Activated T-helper 1 cell treated with anti-CD3 and anti-CD28 coated beads, Interleukin-12 subunit alpha, Interleukin-12 subunit beta, Interleukin-2, Interleukin-4 antibody, amounts not matched to agents 30 ng/mL and 10 ng/mL and 1 ng/mL, durations not matched to agents 14 hours and 24 hours and 36 hours (primary cell): ENCODE measurements at regions of chr1 and their contacts with region 1.

Region 1: DNA sequence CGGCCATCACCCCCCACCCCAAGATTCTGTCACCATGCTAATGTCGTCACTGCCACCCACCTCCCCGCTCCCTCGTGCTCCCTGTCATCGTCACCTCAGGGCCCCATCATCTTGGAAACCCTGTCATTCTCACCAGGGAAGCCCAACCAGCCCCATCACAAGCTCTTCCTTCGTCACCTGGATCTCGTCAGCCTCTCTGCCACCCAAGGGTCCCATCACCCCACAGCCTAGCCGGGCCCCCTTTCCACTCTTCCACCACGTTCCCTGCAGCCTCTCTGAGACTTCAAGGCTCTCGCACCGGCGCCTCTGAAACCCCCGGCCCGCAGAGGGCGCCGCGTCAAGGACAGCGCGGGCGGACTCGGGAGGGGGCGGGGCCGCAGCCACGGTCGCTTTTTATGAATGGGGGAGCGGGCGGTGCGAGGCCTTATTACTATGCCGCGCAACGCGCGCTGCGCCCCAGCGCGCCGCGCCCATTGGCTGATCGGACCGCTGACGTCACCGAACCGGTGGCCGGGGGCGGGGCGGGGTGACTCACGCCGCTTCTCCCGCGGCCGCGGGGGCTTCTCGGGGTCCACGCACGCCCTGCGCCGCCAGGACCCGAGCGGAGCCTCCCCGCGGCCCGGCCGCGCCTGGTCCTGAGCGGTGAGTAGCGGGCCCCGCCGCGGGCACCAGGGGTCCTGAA is at the start of gene GPR3:
- DNase-seq: peak; percentile 91
- H3K4me3 Mint-ChIP-seq: peak within 1 kb of the TSS; percentile 82
- H3K27ac Mint-ChIP-seq: peak within 1 kb of the TSS; percentile 93
- H3K4me1 Mint-ChIP-seq: peaks cover 12% of the 10 kb centered on the region
- H3K27me3 Mint-ChIP-seq: peaks cover 12% of the 10 kb centered on the region
- total RNA-seq, gene GPR3: 3.2 and 4.0 TPM in 2 replicates

Region 2: DNA sequence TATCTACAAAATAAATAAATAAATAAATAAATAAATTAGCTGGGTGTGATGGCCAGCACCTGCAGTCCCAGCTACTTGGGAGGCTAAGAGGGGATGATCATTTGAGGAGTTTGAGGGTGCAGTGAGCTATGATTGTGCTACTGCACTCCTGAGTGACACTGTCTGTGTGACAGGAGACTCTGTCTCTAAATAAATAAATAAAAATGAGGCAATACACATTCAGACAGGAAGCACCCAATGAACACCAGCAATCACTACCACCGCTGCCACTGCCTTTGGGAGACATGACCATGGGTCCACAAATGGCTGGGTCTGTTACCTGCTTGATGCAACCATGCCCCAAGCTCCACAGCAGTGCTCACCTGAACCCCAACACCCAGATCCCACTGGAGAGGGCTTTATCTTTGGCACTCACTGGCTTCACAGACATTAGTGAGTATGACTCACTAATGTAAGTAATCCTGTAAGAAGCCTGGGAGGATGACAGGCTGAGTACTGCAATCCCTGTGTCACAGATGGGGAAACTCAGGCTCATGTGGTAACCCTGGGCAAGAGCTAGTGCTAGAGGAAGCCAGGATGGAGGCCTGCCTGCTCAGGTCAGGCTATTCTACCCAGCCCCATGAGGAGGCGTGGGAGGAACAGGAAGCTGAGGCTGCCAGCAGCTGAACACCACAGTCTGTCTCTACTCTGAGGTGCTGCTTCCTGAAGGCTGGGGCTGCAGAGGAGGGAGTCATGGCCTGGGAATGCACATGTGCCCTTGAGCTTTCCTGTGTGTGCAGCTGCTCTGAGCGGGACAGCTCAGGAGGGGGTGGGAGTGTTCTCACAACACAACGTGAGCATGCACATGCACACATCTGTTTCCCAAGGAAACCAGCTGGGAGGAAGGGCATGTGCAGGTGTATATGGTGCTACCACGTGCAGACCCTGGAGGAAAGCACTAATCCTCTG is 280.3 kb before region 1 on chr1:
- intact Hi-C with region 1: loop called (anchors 10 kb)
- DNase-seq: peak; percentile 61
- H3K4me3 Mint-ChIP-seq: peak overlapping the region; percentile 41
- H3K27ac Mint-ChIP-seq: peak overlapping the region; percentile 77
- H3K4me1 Mint-ChIP-seq: peaks cover 49% of the 10 kb centered on the region
- H3K27me3 Mint-ChIP-seq: no peaks in the 10 kb centered on the region

Region 3: DNA sequence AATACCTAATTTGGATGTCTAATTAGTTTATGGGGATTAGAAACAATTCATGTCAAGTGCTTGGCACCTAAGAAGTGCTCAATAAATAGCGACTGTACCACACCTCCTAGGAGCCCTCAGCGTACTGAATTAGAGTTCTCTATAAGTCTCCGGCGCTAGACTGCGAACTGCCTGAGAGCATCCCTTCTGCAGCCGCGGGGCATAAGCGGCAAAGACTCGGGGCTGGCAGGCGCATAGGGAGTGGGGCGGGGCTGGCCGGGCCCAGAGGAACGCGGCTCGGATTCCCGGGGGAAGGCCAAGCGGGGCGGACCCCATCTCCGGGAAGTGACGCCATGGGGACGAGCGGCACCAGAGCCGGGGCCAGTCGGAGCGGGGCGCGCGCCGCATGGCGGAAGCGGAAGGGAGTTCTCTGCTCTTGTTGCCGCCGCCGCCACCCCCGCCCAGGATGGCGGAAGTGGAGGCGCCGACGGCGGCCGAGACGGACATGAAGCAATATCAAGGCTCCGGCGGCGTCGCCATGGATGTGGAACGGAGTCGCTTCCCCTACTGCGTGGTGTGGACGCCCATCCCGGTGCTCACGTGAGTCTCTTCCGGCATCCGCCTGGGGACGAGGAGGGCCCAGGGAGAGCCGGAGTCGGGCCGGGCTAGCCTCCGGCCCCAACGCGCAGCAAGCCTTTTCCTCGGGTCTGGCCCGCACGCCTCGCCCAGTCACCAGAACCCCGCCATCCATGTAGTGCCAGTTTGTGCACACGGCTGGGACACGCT is 70.2 kb before region 1 on chr1 and contains the start of gene TMEM222:
- intact Hi-C with region 1: loop called (anchors 1 kb)
- DNase-seq: peak; percentile 98
- H3K4me3 Mint-ChIP-seq: peak within 1 kb of the TSS; percentile 97
- H3K27ac Mint-ChIP-seq: peak within 1 kb of the TSS; percentile 90
- H3K4me1 Mint-ChIP-seq: peaks cover 33% of the 10 kb centered on the region
- H3K27me3 Mint-ChIP-seq: no peaks in the 10 kb centered on the region
- total RNA-seq, gene TMEM222: 44.3 and 47.4 TPM in 2 replicates

Region 4: DNA sequence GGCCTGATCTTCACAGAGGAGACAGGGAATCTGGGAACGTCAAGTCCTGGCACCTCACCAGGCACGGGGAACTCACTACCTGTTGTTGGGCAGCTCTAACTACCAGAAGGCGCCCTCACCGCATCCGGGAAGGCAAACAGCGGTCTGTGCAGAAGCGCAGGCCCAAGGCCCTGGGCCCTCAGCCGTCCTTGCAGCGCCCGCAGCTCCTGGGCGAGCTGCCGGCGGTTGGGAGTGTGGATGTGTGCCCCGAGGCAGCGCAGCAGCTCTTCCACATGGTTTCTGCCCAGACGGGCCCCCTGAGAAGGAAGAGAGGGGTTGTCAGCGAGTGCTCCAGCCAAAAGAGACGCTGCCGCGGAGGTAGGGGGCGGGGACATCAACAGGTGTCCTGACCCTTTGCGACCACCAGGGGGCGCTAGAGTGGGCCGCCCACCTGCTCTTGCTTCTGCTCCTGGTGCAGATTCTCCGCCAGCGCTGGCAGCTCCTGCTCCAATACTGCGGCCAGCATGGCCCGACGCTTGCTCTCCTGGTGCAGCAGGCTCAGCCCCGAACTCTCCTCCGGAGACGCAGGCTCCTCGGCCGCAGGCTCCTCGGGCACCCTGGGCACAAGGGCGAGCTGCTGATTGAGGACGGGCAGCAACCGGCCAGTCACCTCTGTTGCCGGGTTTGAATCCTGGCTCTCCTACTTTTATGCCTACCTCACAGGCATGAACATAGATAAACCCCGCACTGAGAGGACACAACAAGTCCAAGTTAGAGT is 34.8 kb before region 1 on chr1:
- intact Hi-C with region 1: loop called (anchors 1 kb)
- DNase-seq: peak; percentile 73
- H3K4me3 Mint-ChIP-seq: peak overlapping the region; percentile 58
- H3K27ac Mint-ChIP-seq: peak overlapping the region; percentile 74
- H3K4me1 Mint-ChIP-seq: peaks cover 22% of the 10 kb centered on the region
- H3K27me3 Mint-ChIP-seq: no peaks in the 10 kb centered on the region

Region 5: DNA sequence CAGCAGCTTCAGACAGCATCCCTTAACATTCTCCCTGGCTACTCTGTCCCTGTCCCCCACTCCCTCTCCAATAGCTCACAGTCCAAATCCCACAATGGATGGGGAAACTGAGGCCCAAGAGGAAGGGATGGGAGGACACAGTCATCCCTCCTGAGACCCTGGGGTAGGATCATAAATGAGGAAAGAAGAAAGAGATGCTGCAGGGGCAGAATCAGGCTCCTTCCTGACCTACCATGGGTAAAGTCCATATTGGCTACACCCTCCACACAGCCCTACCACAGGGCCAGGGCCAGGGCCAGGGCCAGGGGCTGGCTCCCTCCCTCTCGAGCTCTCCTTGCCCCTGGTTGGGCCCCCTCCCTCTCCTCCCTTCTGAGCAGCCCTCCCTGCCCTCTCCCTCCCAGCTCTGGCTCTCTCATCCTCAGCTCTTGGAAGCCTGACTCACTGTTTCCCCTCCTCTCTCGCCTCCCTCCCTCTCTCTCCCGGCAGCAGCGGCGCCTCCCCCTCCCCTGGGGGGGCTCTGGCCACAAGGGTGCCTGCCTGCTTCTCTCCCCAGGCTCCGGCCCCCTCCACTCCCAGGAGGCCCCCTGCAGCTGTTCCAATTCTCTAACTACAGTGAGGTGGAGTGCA is 206.8 kb after region 1 on chr1:
- intact Hi-C with region 1: no loop called
- DNase-seq: no peak
- H3K4me3 Mint-ChIP-seq: peak overlapping the region; percentile 21
- H3K27ac Mint-ChIP-seq: peak overlapping the region; percentile 54
- H3K4me1 Mint-ChIP-seq: peaks cover 31% of the 10 kb centered on the region
- H3K27me3 Mint-ChIP-seq: no peaks in the 10 kb centered on the region

Region 6: DNA sequence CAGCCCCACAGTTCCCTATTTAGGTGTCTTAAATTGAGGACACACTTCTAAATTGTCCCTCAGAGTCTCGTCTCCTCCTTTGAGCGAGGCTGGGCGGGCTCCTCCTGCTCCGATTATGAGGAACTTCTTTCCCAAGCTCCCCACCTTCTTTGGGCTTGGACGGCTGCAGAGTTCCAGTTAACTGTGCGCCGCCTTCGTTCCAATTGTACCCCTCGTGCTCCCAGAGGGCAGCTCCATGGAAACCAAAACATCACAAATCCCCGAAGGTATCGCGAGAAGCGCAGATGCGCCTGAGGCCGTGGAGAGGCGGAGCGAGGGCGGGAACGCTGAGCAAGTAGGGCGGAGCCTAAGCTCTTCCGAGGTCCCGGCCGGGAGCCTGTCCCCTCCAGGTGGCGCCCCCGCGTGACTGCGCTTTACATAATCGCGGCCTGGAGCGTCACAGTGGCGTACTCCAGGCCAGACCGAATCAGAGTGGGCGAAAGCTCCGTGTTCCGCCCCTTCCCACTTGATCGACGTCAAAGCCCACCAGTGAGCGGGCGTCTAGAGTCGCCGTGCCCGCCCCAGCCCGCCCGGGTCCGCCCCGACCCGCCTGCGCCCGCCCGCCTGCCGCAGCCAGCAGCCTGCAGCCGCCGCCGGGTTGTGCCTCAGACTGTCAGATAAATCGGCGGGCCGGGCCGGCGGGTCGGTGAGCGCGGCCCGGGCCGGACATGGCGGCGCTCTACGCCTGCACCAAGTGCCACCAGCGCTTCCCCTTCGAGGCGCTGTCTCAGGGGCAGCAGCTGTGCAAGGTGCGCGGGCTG is 333.3 kb after region 1 on chr1 and contains the start of gene FAM76A:
- intact Hi-C with region 1: loop called (anchors 1 kb)
- DNase-seq: peak; percentile 99
- H3K4me3 Mint-ChIP-seq: peak within 1 kb of the TSS; percentile 86
- H3K27ac Mint-ChIP-seq: peak within 1 kb of the TSS; percentile 97
- H3K4me1 Mint-ChIP-seq: peaks cover 29% of the 10 kb centered on the region
- H3K27me3 Mint-ChIP-seq: no peaks in the 10 kb centered on the region
- total RNA-seq, gene FAM76A: 9.9 and 13.1 TPM in 2 replicates